Dendritic cell treated with granulocyte-macrophage colony-stimulating factor and Interleukin-4, amounts not matched to agents 40 ng/mL and 50 ng/mL, for 4 days (primary cell): ENCODE measurements at regions of chr19 and their contacts with region 1.

Region 1: DNA sequence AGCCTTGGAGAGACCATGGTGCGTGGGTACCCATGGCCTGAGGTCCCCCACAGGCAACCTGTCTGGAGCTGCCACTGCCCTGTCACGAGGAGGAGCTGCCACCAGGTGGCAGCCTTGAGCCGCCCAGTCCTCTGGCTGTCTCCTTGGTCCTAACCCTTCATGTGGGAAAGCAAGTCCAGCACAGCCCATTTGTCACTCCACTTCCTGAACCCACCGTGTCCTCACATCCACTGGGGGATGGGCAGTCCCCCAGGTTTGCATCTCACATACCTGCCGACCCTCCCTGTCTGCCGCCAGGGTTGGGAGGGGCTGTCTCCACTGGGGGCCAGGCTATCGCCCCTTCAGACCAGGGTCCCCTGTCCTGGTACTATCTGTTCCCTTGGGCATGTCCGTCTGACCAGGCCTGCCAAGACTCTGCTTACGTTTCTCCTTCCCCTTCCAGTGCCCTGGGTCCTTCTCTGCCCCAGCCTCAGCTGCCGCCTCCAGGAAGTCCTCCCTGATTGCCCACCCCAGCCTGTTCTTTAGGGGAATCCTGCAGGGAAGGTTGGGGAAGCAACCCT is 4.5 kb downstream of the FAM174C start:
- H3K4me3 Mint-ChIP-seq: no peak overlapping the region
- H3K27ac Mint-ChIP-seq: no peak overlapping the region
- H3K4me1 Mint-ChIP-seq: peaks cover 37% of the 10 kb centered on the region
- H3K27me3 Mint-ChIP-seq: peaks cover 27% of the 10 kb centered on the region

Region 2: GRCh38 chr19:1373534-1374249 is 93.8 kb after region 1 on chr19:
- intact Hi-C with region 1: loop called (anchors 1 kb)
- H3K4me3 Mint-ChIP-seq: no peak overlapping the region
- H3K27ac Mint-ChIP-seq: no peak overlapping the region
- H3K4me1 Mint-ChIP-seq: no peaks in the 10 kb centered on the region
- H3K27me3 Mint-ChIP-seq: no peaks in the 10 kb centered on the region